ENCODE measurements at regions of chr3 and their contacts with region 1.

Region 1: DNA sequence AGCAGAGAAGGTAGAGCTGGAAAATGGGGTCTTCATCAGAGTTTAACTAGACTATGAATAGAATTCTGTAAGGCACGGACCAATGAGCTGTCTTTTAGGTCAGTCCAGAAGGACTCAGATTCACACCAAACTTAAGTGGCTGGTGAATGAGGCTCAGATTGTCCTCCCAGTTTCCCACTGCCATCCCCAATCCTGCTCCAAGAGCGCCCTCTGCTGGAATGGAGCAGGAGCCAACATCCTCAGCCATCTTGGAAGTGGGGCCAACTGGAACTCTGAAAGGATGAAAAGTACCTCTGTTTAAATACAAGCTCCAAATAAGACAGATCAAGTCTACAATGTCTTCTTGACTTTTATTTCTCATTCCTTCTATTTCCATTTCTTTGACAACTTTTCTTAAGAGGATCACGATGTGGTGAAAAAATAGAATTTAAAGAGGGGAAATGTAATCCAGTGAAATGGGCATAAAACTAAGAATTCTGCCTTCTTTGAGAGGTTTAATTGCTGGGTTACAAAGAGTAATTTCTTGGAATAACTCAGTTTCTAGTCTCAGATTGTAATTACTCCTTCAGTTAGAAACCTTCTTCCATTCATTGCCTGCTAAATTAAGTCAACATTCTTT is 217.1 kb upstream of the TPRG1 start:
- DNase-seq: peak; percentile 94
- H3K4me3 Mint-ChIP-seq: no peak overlapping the region
- H3K27ac Mint-ChIP-seq: peak overlapping the region; percentile 10
- H3K4me1 Mint-ChIP-seq: peaks cover 27% of the 10 kb centered on the region
- H3K27me3 Mint-ChIP-seq: peaks cover 6% of the 10 kb centered on the region

Region 2: GRCh38 chr3:188061133-188061532 is 893.6 kb before region 1 on chr3:
- intact Hi-C with region 1: loop called (anchors 5 kb)
- DNase-seq: peak; percentile 85
- H3K4me3 Mint-ChIP-seq: peak overlapping the region; percentile 66
- H3K27ac Mint-ChIP-seq: peak overlapping the region; percentile 88
- H3K4me1 Mint-ChIP-seq: peaks cover 32% of the 10 kb centered on the region
- H3K27me3 Mint-ChIP-seq: no peaks in the 10 kb centered on the region

Region 3: GRCh38 chr3:188584162-188584529 is 370.6 kb before region 1 on chr3:
- intact Hi-C with region 1: loop called (anchors 10 kb)
- DNase-seq: no peak
- H3K4me3 Mint-ChIP-seq: no peak overlapping the region
- H3K27ac Mint-ChIP-seq: no peak overlapping the region
- H3K4me1 Mint-ChIP-seq: peaks cover 14% of the 10 kb centered on the region
- H3K27me3 Mint-ChIP-seq: no peaks in the 10 kb centered on the region

Region 4: GRCh38 chr3:188830893-188831292 is 123.8 kb before region 1 on chr3:
- intact Hi-C with region 1: loop called (anchors 2 kb)
- DNase-seq: no peak
- H3K4me3 Mint-ChIP-seq: no peak overlapping the region
- H3K27ac Mint-ChIP-seq: no peak overlapping the region
- H3K4me1 Mint-ChIP-seq: peaks cover 4% of the 10 kb centered on the region
- H3K27me3 Mint-ChIP-seq: no peaks in the 10 kb centered on the region

Region 5: GRCh38 chr3:189404797-189405484 is 450.2 kb after region 1 on chr3:
- intact Hi-C with region 1: no loop called
- DNase-seq: no peak
- H3K4me3 Mint-ChIP-seq: no peak overlapping the region
- H3K27ac Mint-ChIP-seq: no peak overlapping the region
- H3K4me1 Mint-ChIP-seq: peaks cover 7% of the 10 kb centered on the region
- H3K27me3 Mint-ChIP-seq: peaks cover 2% of the 10 kb centered on the region

Measured in activated CD4-positive, alpha-beta T cell treated with anti-CD3 and anti-CD28 coated beads, Interleukin-2, amount 10 ng/mL, durations not matched to agents 24 days and 14 days (primary cell).